ENCODE measurements at regions of chr15 and their contacts with region 1.

Region 1: GRCh38 chr15:89740137-89740536 is 10.9 kb downstream of the MESP1 start:
- DNase-seq: peak; percentile 77 to 81 (median 78)
- ATAC-seq: peak; percentile 95
- H3K4me3 ChIP-seq: no peak overlapping the region
- H3K27ac ChIP-seq: no peak overlapping the region
- H3K4me1 ChIP-seq: no peaks in the 10 kb centered on the region; a peak in 1 of 5 replicates
- H3K27me3 ChIP-seq: peaks cover 14 to 51% of the 10 kb centered on the region in 2 experiments; a peak in 3 of 5 replicates
- CTCF ChIP-seq: peak; percentile 86 to 96 (median 91)
- EP300 ChIP-seq: no peak
- POLR2A ChIP-seq: no peak
- RAD21 ChIP-seq: peak; percentile 83 to 91

Region 2: GRCh38 chr15:88932271-88932874 is 807.8 kb before region 1 on chr15:
- CTCF ChIA-PET with region 1: no interaction called
- POLR2A ChIA-PET with region 1: no interaction called
- in situ Hi-C with region 1: no loop called
- intact Hi-C with region 1: no loop called
- DNase-seq: no peak
- ATAC-seq: no peak
- H3K4me3 ChIP-seq: no peak overlapping the region
- H3K27ac ChIP-seq: no peak overlapping the region
- H3K4me1 ChIP-seq: peaks cover 0 to 9% of the 10 kb centered on the region in 2 experiments; a peak in 2 of 5 replicates
- H3K27me3 ChIP-seq: no peaks in the 10 kb centered on the region
- CTCF ChIP-seq: no peak
- EP300 ChIP-seq: no peak
- POLR2A ChIP-seq: no peak
- RAD21 ChIP-seq: no peak

Region 3: GRCh38 chr15:89614164-89614563 is 126.0 kb before region 1 on chr15:
- CTCF ChIA-PET with region 1: no interaction called
- POLR2A ChIA-PET with region 1: no interaction called
- in situ Hi-C with region 1: no loop called
- intact Hi-C with region 1: no loop called
- DNase-seq: no peak
- ATAC-seq: no peak
- H3K4me3 ChIP-seq: no peak overlapping the region
- H3K27ac ChIP-seq: no peak overlapping the region
- H3K4me1 ChIP-seq: no peaks in the 10 kb centered on the region
- H3K27me3 ChIP-seq: no peaks in the 10 kb centered on the region
- CTCF ChIP-seq: no peak
- EP300 ChIP-seq: no peak
- POLR2A ChIP-seq: no peak
- RAD21 ChIP-seq: no peak

Region 4: GRCh38 chr15:89874926-89875564 is 134.9 kb after region 1 on chr15:
- CTCF ChIA-PET with region 1: interaction called, 6 read pairs
- POLR2A ChIA-PET with region 1: no interaction called
- in situ Hi-C with region 1: no loop called
- intact Hi-C with region 1: loop called (anchors 1 kb)
- DNase-seq: peak; percentile 76 to 83 (median 78)
- ATAC-seq: peak; percentile 100
- H3K4me3 ChIP-seq: no peak overlapping the region
- H3K27ac ChIP-seq: no peak overlapping the region
- H3K4me1 ChIP-seq: peaks cover 0 to 3% of the 10 kb centered on the region in 2 experiments; a peak in 1 of 5 replicates
- H3K27me3 ChIP-seq: no peaks in the 10 kb centered on the region
- CTCF ChIP-seq: peak; percentile 90 to 94 (median 90)
- EP300 ChIP-seq: no peak
- POLR2A ChIP-seq: no peak
- RAD21 ChIP-seq: peak; percentile 84 to 85

Region 5: DNA sequence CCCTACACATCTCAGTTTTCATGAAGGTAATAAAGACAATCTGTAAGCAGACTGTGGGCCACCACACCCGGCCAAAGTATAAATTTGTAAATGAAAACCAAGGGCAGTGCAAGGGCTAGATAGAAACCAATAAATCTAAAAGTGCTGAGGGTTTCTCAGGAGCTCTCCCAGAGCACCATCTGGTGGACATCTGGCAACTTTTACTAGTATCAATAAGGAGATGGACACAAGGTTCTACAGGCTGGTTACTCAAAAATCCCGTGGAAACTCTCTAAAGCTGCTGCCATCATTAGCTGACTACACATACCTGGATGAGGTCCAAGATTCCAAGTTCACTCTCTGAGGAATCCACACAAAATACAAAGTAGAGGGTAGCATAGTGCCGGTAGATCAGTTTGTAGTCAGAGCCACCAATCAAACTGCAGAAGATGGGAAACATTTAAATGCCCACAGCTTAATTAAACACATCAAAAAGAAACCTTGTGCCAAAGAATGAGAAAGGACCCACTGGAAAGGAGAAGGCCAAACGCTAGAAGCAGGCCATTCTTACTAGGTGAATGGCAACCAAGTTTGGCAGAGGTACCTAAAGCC is 148.2 kb after region 1 on chr15:
- CTCF ChIA-PET with region 1: interaction called, 11 read pairs
- POLR2A ChIA-PET with region 1: interaction called, 3 read pairs
- in situ Hi-C with region 1: no loop called
- intact Hi-C with region 1: loop called (anchors 1 kb)
- DNase-seq: peak in 1 of 4 experiments; percentile 51
- ATAC-seq: peak; percentile 71
- H3K4me3 ChIP-seq: no peak overlapping the region
- H3K27ac ChIP-seq: no peak overlapping the region
- H3K4me1 ChIP-seq: peaks cover 0 to 6% of the 10 kb centered on the region in 2 experiments; a peak in 1 of 5 replicates
- H3K27me3 ChIP-seq: no peaks in the 10 kb centered on the region
- CTCF ChIP-seq: peak; percentile 45 to 61 (median 55); a peak in 4 of 6 replicates
- EP300 ChIP-seq: no peak
- POLR2A ChIP-seq: no peak
- RAD21 ChIP-seq: peak; percentile 36 to 65

Region 6: GRCh38 chr15:89971592-89971997 is 231.5 kb after region 1 on chr15:
- CTCF ChIA-PET with region 1: no interaction called
- POLR2A ChIA-PET with region 1: no interaction called
- in situ Hi-C with region 1: no loop called
- intact Hi-C with region 1: loop called (anchors 1 kb)
- DNase-seq: peak; percentile 50 to 78 (median 65)
- ATAC-seq: peak; percentile 100
- H3K4me3 ChIP-seq: no peak overlapping the region
- H3K27ac ChIP-seq: no peak overlapping the region
- H3K4me1 ChIP-seq: no peaks in the 10 kb centered on the region
- H3K27me3 ChIP-seq: no peaks in the 10 kb centered on the region
- CTCF ChIP-seq: peak; percentile 90 to 99 (median 98)
- EP300 ChIP-seq: no peak
- POLR2A ChIP-seq: no peak
- RAD21 ChIP-seq: peak; percentile 54 to 76

Region 7: DNA sequence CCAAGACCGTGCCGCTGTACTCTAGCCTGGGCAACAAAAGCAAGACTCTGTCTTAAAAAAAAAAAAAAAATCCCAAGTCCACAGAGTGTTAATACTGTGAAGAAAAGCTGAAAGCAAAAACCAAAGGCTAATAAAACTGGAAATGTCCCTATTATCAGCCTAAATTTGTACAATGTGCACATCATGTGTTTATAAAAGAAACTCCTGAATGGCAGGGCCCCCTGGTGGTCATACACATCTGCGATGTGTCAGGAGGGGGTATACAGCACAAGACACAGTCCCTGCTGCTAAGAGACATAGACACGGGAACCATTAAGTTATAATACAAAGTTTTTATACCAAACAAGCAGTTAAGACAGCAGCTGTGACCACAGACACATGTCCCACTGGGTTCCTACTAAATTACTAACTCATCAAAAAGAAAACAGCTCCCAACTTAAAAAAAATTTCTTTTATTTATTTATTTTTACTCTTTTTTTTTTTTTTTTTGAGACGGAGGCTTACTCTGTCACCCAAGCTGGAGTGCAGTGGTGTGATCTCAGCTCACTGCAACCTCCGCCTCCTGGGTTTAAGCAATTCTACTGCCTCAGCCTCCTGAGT is 331.2 kb after region 1 on chr15:
- CTCF ChIA-PET with region 1: interaction called, 7 read pairs
- POLR2A ChIA-PET with region 1: no interaction called
- in situ Hi-C with region 1: loop called (anchors 10 kb)
- intact Hi-C with region 1: loop called (anchors 5 kb)
- DNase-seq: peak; percentile 73 to 87 (median 76)
- ATAC-seq: peak; percentile 94
- H3K4me3 ChIP-seq: no peak overlapping the region
- H3K27ac ChIP-seq: no peak overlapping the region
- H3K4me1 ChIP-seq: peaks cover 0 to 17% of the 10 kb centered on the region in 2 experiments; a peak in 1 of 5 replicates
- H3K27me3 ChIP-seq: no peaks in the 10 kb centered on the region
- CTCF ChIP-seq: peak; percentile 86 to 89 (median 87)
- EP300 ChIP-seq: no peak
- POLR2A ChIP-seq: no peak
- RAD21 ChIP-seq: peak; percentile 90 to 94

Region 8: DNA sequence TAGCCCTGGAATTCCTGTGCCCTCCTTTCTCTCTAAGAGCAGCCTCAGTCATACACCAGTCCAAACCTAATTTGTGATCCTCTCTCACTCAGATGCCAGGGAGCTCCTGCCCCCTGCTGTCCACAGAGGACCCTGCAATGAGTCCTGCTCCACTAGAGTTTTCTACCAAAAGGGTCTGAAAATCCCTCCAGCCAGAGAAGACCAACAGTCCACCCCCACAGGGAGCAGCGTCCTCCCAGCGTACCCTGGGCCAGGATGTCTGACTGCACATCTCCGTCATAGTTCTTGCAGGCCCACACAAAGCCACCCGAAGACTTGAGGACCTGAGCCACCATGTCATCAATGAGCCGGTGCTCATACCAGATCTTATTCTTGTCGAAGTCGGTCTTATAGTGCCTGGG is 346.7 kb after region 1 on chr15:
- CTCF ChIA-PET with region 1: interaction called, 4 read pairs
- POLR2A ChIA-PET with region 1: interaction called, 5 read pairs
- in situ Hi-C with region 1: no loop called
- intact Hi-C with region 1: loop called (anchors 5 kb)
- DNase-seq: peak; percentile 67 to 74 (median 72)
- ATAC-seq: peak; percentile 87
- H3K4me3 ChIP-seq: no peak overlapping the region
- H3K27ac ChIP-seq: no peak overlapping the region
- H3K4me1 ChIP-seq: peaks cover 0 to 17% of the 10 kb centered on the region in 2 experiments; a peak in 2 of 5 replicates
- H3K27me3 ChIP-seq: no peaks in the 10 kb centered on the region
- CTCF ChIP-seq: peak; percentile 83 to 88 (median 86)
- EP300 ChIP-seq: no peak
- POLR2A ChIP-seq: no peak
- RAD21 ChIP-seq: peak; percentile 61 to 83

Region 9: GRCh38 chr15:90286678-90287077 is 546.5 kb after region 1 on chr15:
- CTCF ChIA-PET with region 1: no interaction called
- POLR2A ChIA-PET with region 1: no interaction called
- in situ Hi-C with region 1: no loop called
- intact Hi-C with region 1: loop called (anchors 10 kb)
- DNase-seq: peak in 2 of 4 experiments; percentile 45 to 55
- ATAC-seq: peak; percentile 92
- H3K4me3 ChIP-seq: no peak overlapping the region
- H3K27ac ChIP-seq: no peak overlapping the region
- H3K4me1 ChIP-seq: peaks cover 2 to 3% of the 10 kb centered on the region in 2 experiments; a peak in 3 of 5 replicates
- H3K27me3 ChIP-seq: no peaks in the 10 kb centered on the region
- CTCF ChIP-seq: peak; percentile 68 to 91 (median 68)
- EP300 ChIP-seq: no peak
- POLR2A ChIP-seq: no peak
- RAD21 ChIP-seq: peak; percentile 88 to 89

Measured in K562 (cell line).